MCF 10A (cell line): ENCODE measurements at regions of chr12 and their contacts with region 1.

Region 1: DNA sequence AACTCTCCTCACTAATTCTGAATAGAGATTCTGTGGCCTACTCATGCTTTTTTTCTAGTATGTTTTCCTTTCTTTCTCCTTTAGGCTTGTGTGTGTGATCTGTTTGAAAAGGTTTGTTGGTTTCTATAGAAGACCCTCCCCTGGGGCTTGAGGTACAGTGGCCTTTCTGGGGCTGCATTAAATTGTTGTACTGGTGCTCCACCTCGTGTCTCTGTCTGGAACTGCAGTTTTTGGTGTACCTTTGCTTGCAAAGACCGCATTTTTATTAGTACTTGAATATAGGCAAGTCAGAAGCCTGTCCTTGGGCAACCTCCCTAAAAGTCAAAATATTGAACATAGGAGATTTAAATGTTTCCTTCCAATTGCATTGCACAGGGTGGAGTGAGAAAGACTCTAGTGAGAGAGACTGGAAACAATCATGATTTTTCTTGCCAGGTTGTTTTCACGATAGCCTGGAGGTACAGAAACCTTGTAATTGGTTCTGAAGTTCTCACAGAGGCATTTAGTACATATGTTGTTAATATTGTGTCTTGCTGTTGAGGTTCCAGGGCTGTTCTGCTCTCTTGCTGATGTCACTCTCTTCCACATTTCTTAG is 39.0 kb downstream of the SLCO1B1 start:
- DNase-seq: peak; percentile 60
- H3K4me3 Mint-ChIP-seq: no peak overlapping the region
- H3K27ac Mint-ChIP-seq: no peak overlapping the region
- H3K4me1 Mint-ChIP-seq: no peaks in the 10 kb centered on the region
- H3K27me3 Mint-ChIP-seq: peaks cover 83% of the 10 kb centered on the region
- CTCF ChIP-seq: peak; percentile 68

Region 2: GRCh38 chr12:20463913-20464524 is 706.0 kb before region 1 on chr12:
- CTCF ChIA-PET with region 1: no interaction called
- POLR2A ChIA-PET with region 1: no interaction called
- intact Hi-C with region 1: loop called (anchors 1 kb)
- DNase-seq: peak; percentile 26
- H3K4me3 Mint-ChIP-seq: no peak overlapping the region
- H3K27ac Mint-ChIP-seq: no peak overlapping the region
- H3K4me1 Mint-ChIP-seq: no peaks in the 10 kb centered on the region
- H3K27me3 Mint-ChIP-seq: peaks cover 55% of the 10 kb centered on the region
- CTCF ChIP-seq: peak; percentile 49

Region 3: GRCh38 chr12:20646239-20646827 is 523.6 kb before region 1 on chr12:
- CTCF ChIA-PET with region 1: no interaction called
- POLR2A ChIA-PET with region 1: no interaction called
- intact Hi-C with region 1: loop called (anchors 1 kb)
- DNase-seq: peak; percentile 44
- H3K4me3 Mint-ChIP-seq: no peak overlapping the region
- H3K27ac Mint-ChIP-seq: no peak overlapping the region
- H3K4me1 Mint-ChIP-seq: no peaks in the 10 kb centered on the region
- H3K27me3 Mint-ChIP-seq: peaks cover 19% of the 10 kb centered on the region
- CTCF ChIP-seq: peak; percentile 46

Region 4: DNA sequence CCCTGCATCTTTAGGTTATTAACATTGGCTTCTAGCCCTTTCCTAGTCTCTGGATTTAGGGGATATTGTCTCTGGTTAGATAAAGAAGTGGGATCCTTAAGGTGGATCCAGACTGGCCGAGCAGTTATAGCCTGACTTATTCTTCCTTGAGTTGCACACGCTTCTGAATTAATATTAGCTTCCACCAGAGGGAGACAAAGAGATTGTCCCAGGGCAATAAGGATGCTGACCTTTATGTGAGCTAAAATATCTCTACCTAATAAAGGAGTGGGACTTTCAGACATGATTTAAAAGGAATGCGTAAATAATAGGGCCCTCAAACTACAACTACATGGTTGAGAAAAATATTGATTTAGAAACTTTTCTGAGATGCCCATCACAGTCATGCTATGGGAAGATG is 219.7 kb before region 1 on chr12:
- CTCF ChIA-PET with region 1: interaction called, 3 read pairs
- POLR2A ChIA-PET with region 1: no interaction called
- intact Hi-C with region 1: loop called (anchors 2 kb)
- DNase-seq: peak; percentile 48
- H3K4me3 Mint-ChIP-seq: no peak overlapping the region
- H3K27ac Mint-ChIP-seq: no peak overlapping the region
- H3K4me1 Mint-ChIP-seq: no peaks in the 10 kb centered on the region
- H3K27me3 Mint-ChIP-seq: no peaks in the 10 kb centered on the region
- CTCF ChIP-seq: peak; percentile 30

Region 5: GRCh38 chr12:21599143-21599999 is 429.4 kb after region 1 on chr12:
- CTCF ChIA-PET with region 1: no interaction called
- POLR2A ChIA-PET with region 1: no interaction called
- intact Hi-C with region 1: no loop called
- DNase-seq: no peak
- H3K4me3 Mint-ChIP-seq: no peak overlapping the region
- H3K27ac Mint-ChIP-seq: no peak overlapping the region
- H3K4me1 Mint-ChIP-seq: no peaks in the 10 kb centered on the region
- H3K27me3 Mint-ChIP-seq: no peaks in the 10 kb centered on the region
- CTCF ChIP-seq: no peak